H1 (cell line): ENCODE measurements at regions of chr1 and their contacts with region 1.

Region 1: DNA sequence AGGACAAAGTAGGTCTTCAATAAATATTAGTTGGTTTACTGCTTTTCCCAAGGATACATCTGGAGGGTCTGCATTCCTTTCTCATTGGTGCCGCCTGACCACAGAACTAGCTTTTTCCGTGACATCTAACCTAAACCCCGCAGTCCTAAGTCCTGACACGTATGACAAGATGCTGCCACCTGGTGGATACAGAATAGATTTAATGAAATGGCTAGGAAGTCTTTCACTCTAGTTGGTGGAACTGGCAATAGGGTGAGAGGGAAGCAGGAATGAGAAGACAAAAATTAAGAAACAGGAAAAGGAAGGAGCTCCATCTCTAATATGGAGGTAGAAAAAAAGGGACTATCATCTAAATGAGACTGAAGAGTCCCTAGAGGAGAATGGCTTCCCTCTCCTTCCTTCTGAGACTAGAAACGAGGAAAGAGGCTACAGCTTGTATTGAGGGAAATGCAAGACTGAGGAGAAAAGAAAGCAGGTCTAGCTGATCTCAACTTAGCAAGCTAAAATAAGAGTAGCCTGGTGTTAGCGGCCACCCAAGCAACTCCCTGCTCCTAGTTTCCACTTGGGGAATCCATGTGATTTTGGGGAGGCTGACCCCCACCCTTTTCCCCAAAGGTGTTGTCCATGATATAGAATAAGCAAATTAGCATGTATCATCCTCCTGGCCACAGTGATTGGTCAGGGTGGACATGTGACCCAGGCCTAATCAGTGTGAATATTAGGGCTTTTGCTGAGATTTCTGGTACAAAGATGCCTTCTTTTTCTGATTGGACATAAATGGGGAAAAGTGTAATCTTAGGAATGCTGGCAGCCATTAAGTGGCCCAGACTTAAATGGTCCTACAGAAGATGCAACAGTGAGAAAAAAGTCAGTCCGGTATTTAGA is 5.9 kb downstream of the RFX5 start:
- DNase-seq: no peak
- H3K4me3 ChIP-seq: no peak overlapping the region
- H3K27ac ChIP-seq: no peak overlapping the region
- H3K4me1 ChIP-seq: peaks cover 3 to 5% (median 4%) of the 10 kb centered on the region in 4 experiments; a peak in 5 of 7 replicates
- H3K27me3 ChIP-seq: no peaks in the 10 kb centered on the region
- CTCF ChIP-seq: peak; percentile 18 to 78 (median 74)
- EP300 ChIP-seq: no peak
- POLR2A ChIP-seq: peak; percentile 13 to 22; a peak in 2 of 3 replicates
- RAD21 ChIP-seq: peak; percentile 84

Region 2: GRCh38 chr1:150798525-150798924 is 542.6 kb before region 1 on chr1:
- CTCF ChIA-PET with region 1: no interaction called
- POLR2A ChIA-PET with region 1: no interaction called
- DNase-seq: no peak
- H3K4me3 ChIP-seq: no peak overlapping the region
- H3K27ac ChIP-seq: no peak overlapping the region
- H3K4me1 ChIP-seq: peaks cover 3 to 15% (median 4%) of the 10 kb centered on the region in 4 experiments; a peak in 4 of 7 replicates
- H3K27me3 ChIP-seq: no peaks in the 10 kb centered on the region
- CTCF ChIP-seq: no peak
- EP300 ChIP-seq: no peak
- POLR2A ChIP-seq: no peak
- RAD21 ChIP-seq: no peak

Region 3: GRCh38 chr1:151281969-151282882 is 58.9 kb before region 1 on chr1 and contains the start of gene ZNF687:
- CTCF ChIA-PET with region 1: interaction called, 5 read pairs
- POLR2A ChIA-PET with region 1: interaction called, 16 read pairs
- DNase-seq: peak; percentile 98 to 100
- H3K4me3 ChIP-seq: peak within 1 kb of the TSS; percentile 77 to 96 (median 86)
- H3K27ac ChIP-seq: peak within 1 kb of the TSS; percentile 99
- H3K4me1 ChIP-seq: peaks cover 5 to 9% (median 7%) of the 10 kb centered on the region in 4 experiments; a peak in 5 of 7 replicates
- H3K27me3 ChIP-seq: no peaks in the 10 kb centered on the region
- CTCF ChIP-seq: no peak
- EP300 ChIP-seq: no peak
- POLR2A ChIP-seq: no peak; a peak in 1 of 3 replicates
- RAD21 ChIP-seq: no peak
- total RNA-seq, gene ZNF687: 43.0 and 45.9 TPM in 2 replicates

Region 4: DNA sequence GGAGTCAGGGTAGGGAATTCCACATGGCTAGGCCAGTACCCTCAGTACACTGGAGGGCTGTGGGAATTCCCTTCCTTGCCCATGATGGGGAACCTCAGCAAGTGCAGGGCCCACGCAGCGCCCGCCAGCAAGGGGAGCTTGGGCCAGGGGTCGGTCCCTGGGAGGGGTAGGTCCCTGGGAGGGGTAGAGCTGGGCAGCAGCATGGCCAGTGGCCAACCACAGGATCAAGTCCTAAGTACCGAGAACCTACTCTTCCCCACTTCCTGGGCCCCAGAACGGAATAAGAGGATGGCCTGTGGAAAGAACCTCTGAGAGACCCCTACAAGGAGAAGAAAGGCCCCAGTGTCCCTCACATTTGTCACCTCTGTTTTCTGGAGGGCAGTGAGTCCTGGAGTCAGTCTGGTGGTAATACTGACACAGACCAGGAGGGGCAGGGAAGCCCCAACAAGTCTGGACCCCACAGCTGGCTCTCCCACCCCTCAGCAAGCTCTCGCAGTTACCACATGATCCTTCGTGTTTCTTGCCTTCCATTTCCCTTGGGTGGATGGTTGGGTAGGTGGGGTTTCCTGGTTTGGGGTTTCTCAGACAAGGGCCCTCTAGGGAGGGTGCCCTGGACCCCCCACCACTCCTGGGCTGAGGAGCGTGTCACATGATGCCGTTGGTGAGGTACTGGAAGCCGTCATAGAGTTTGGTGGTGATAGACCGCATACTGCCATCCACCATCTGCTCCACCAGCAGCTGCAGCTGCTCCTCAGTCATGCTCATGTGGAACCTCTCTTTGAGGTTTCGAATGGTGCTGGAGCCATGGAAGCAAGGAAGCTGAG is 48.7 kb before region 1 on chr1:
- CTCF ChIA-PET with region 1: interaction called, 62 read pairs
- POLR2A ChIA-PET with region 1: interaction called, 102 read pairs
- DNase-seq: no peak
- H3K4me3 ChIP-seq: no peak overlapping the region
- H3K27ac ChIP-seq: no peak overlapping the region
- H3K4me1 ChIP-seq: peaks cover 6 to 21% (median 15%) of the 10 kb centered on the region in 4 experiments
- H3K27me3 ChIP-seq: no peaks in the 10 kb centered on the region
- CTCF ChIP-seq: peak; percentile 23 to 38 (median 28); a peak in 3 of 4 replicates
- EP300 ChIP-seq: no peak
- POLR2A ChIP-seq: peak; percentile 51 to 53
- RAD21 ChIP-seq: peak; percentile 6 to 27; a peak in 2 of 4 replicates

Region 5: GRCh38 chr1:151311589-151312331 is 29.4 kb before region 1 on chr1:
- CTCF ChIA-PET with region 1: interaction called, 129 read pairs
- POLR2A ChIA-PET with region 1: interaction called, 9 read pairs
- DNase-seq: no peak
- H3K4me3 ChIP-seq: no peak overlapping the region
- H3K27ac ChIP-seq: no peak overlapping the region
- H3K4me1 ChIP-seq: 0 out of 7 replicates have a peak, but pooled peaks cover 0 to 3% (median 0%) of the 10 kb centered on the region in 4 experiments
- H3K27me3 ChIP-seq: no peaks in the 10 kb centered on the region
- CTCF ChIP-seq: no peak
- EP300 ChIP-seq: no peak
- POLR2A ChIP-seq: no peak
- RAD21 ChIP-seq: no peak

Region 6: DNA sequence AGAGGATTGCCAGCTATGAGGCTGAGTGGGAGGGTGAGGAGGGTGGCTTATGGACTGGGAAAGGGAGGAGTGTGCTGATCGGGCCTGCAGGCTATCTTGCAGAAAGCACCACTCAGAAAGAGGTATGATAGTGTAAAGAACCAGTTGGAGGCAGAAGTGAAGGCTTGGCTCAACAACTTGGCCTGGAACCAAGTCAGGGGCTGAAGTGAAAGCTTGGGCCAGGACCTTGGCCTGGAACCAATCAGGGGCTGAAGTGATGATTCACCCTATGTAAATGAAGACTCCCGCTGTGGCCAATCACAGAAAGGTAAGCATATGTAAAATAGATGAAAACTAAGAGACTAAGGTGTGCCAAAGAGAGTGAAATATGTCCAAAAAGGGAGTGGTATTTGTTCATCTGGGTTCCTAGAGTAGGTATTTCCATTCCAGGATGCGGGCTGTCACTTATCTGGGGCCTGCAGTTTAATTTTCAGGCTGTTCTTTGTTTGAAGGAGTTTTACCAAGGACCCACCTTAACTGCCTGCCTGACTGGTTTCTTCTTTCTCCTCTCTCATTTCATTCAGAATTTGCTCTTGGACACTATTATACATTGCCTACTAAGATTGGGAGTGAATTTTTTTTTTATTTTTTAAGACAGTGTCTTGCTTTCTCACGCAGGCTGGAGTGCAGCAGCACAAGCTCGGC is 11.0 kb after region 1 on chr1:
- CTCF ChIA-PET with region 1: interaction called, 19 read pairs
- POLR2A ChIA-PET with region 1: interaction called, 6 read pairs
- DNase-seq: no peak
- H3K4me3 ChIP-seq: no peak overlapping the region
- H3K27ac ChIP-seq: no peak overlapping the region
- H3K4me1 ChIP-seq: peaks cover 0 to 9% (median 7%) of the 10 kb centered on the region in 4 experiments; a peak in 4 of 7 replicates
- H3K27me3 ChIP-seq: no peaks in the 10 kb centered on the region
- CTCF ChIP-seq: no peak
- EP300 ChIP-seq: no peak
- POLR2A ChIP-seq: no peak
- RAD21 ChIP-seq: no peak